Activated CD8-positive, alpha-beta memory T cell treated with anti-CD3 and anti-CD28 coated beads, Interleukin-2, amount 10 ng/mL, durations not matched to agents 7 days and 5 days (primary cell): ENCODE measurements at regions of chr13 and their contacts with region 1.

Region 1: GRCh38 chr13:27424246-27425157 is at the start of gene GTF3A:
- DNase-seq: peak; percentile 90
- ATAC-seq: peak; percentile 75
- H3K4me3 Mint-ChIP-seq: peak within 1 kb of the TSS; percentile 86
- H3K27ac Mint-ChIP-seq: peak within 1 kb of the TSS; percentile 97
- H3K4me1 Mint-ChIP-seq: peaks cover 40% of the 10 kb centered on the region
- H3K27me3 Mint-ChIP-seq: no peaks in the 10 kb centered on the region
- total RNA-seq, gene GTF3A: 189 to 225 TPM

Region 2: DNA sequence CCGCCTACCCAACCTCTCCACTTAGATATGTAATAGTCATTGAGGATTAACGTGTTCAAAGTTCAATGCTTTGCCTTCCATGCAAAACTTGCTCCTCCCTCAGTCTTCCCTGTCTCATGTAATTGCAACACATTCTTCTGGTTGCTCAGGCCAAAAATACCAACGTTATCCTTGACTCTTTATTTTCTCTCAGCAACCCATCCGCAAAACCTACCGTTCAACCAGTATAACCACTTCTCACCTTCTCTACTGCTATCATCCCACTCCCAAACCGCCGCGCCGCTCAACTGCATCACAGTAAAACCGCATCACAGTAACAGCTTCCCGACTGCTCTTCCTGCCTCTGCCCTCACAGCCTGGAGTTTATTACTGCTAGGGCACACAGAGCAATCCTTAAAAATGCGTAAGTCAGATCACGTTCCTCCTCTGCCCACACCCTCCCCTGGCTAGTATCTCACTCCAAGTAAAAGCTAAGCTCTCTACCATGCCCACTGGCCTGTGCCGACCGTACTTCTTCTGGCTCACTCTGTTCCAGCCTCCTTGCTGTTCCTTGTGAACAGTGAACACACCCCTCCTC is 17.7 kb after region 1 on chr13:
- CTCF ChIA-PET with region 1: interaction called, 24 read pairs
- DNase-seq: no peak
- ATAC-seq: peak; percentile 35
- H3K4me3 Mint-ChIP-seq: peak overlapping the region; percentile 23
- H3K27ac Mint-ChIP-seq: peak overlapping the region; percentile 56
- H3K4me1 Mint-ChIP-seq: peaks cover 58% of the 10 kb centered on the region
- H3K27me3 Mint-ChIP-seq: no peaks in the 10 kb centered on the region

Region 3: DNA sequence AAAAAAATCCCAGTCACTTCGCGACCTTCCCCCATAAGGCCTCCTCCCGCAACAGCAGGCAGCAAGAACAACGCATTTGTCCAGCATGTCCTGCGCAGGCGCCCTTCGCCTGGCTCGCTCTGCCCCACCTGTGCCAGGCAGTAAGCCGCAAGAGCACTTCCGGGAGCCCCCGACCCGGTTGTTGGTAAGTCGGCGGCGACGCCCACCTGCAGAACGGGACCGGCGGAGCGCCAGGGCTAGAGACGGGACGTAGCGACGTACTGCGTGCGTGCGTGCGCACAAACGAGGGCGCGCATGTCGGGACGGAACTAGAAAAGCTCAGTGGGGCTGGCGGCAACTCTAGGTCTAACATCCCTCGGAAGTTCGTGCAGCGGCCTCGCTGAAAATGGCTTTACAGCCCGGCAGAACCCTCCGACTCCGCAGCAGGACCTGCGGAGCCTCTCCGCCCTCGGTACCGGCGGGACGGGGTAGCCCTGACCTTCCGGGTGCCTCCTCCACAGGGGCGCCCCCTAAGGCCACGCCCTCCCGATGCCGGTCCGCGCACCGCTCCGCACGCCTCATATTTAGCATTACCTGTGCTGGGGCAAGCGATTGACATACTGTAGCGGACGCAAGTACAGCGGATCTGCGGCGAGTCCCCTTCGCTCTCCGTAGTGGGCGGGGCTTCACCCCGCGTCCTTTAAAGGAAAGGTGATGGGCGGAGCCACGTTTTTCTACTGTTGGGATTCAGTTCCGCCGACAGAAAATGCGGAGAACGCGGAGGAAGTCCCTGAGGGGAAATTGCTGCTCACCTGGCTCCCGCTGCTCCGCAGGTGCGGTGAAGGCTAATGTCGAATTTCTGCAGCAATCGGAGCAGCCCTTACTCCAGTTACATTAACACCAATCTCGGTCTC is 25.7 kb after region 1 on chr13 and contains the start of gene MTIF3:
- CTCF ChIA-PET with region 1: interaction called, 39 read pairs
- DNase-seq: peak; percentile 98
- ATAC-seq: peak; percentile 91
- H3K4me3 Mint-ChIP-seq: peak within 1 kb of the TSS; percentile 87
- H3K27ac Mint-ChIP-seq: peak within 1 kb of the TSS; percentile 98
- H3K4me1 Mint-ChIP-seq: peaks cover 54% of the 10 kb centered on the region
- H3K27me3 Mint-ChIP-seq: no peaks in the 10 kb centered on the region
- total RNA-seq, gene MTIF3: 41.2 to 47.3 TPM

Region 4: DNA sequence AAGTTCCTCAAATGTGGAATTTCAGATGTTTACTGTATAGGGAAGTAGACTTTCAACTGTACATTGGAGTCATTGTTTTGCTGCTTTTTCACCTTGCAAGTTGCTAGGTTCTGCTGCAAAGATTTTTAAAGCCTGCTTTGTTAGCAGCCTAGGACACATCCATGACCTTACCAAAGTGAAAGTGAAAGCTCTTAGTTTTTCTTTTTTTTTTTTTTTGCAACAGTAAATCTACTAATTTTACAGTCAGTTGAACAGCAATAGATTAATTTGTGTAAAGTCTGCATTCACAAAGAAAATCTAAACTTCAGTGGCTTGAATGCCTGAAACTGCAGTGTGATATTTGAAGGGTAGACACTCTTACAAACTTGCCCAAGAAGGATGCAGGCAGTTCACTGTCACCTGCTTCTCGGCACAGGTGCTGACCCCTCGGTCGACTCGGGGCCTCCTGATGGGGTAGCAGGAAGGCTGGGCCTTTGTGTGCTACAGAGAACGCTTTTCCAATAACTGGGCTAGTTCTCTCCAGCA is 30.9 kb after region 1 on chr13:
- CTCF ChIA-PET with region 1: interaction called, 39 read pairs
- DNase-seq: no peak
- ATAC-seq: peak; percentile 50
- H3K4me3 Mint-ChIP-seq: peak overlapping the region; percentile 77
- H3K27ac Mint-ChIP-seq: peak overlapping the region; percentile 97
- H3K4me1 Mint-ChIP-seq: peaks cover 33% of the 10 kb centered on the region
- H3K27me3 Mint-ChIP-seq: no peaks in the 10 kb centered on the region

Region 5: DNA sequence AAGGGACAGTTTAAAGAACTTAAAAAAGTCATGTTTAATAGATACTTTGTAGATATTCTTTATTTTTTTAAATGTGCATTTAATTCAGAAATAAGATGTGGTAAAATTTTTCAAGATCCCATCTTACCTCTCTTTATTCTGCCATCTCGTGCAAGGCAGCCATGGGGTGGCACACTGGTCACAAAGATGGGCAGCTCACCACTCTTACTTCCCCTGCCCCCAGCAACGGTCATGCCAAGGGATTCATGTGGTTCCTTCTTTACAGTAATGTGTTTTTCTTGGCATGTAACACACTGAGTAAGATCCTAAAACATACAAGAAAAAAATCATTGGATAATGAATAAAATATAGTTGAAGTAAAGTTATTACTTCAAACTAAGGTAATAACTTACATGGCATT is 131.6 kb after region 1 on chr13:
- CTCF ChIA-PET with region 1: no interaction called
- DNase-seq: no peak
- ATAC-seq: no peak
- H3K4me3 Mint-ChIP-seq: no peak overlapping the region
- H3K27ac Mint-ChIP-seq: no peak overlapping the region
- H3K4me1 Mint-ChIP-seq: peaks cover 7% of the 10 kb centered on the region
- H3K27me3 Mint-ChIP-seq: no peaks in the 10 kb centered on the region